ENCODE measurements at regions of chr7 and their contacts with region 1.

Region 1: DNA sequence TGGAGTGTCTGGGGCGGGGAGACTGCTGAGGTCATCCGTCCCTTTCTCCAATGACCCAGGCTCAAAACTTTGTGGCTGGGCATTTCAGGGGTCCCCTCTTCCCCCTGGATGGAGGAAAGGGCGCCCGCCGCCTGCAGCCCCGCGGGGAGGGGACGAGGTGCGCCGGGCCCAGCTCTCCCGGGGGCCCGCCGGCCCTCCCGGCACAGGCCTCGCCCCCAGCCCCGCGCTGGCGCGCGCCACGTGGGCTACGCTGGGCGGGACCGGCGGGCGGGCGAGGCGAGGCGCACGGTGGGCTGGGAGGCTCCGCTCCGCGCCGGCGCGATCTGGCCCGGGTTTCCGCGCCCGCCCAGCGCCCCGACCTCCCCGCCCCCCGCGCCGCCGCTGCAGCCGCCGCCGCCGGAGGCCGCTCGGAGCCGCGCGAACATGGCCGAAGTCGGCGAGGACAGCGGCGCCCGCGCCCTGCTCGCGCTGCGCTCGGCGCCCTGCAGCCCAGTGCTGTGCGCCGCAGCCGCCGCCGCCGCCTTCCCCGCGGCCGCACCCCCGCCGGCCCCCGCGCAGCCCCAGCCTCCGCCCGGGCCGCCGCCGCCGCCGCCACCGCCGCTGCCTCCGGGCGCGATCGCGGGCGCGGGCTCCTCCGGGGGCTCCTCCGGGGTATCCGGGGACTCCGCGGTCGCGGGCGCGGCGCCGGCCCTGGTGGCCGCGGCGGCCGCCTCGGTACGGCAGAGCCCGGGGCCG is at the start of gene FOXK1:
- DNase-seq: peak; percentile 75
- H3K4me3 Mint-ChIP-seq: peak within 1 kb of the TSS; percentile 81
- H3K27ac Mint-ChIP-seq: peak within 1 kb of the TSS; percentile 94
- H3K4me1 Mint-ChIP-seq: peaks cover 29% of the 10 kb centered on the region
- H3K27me3 Mint-ChIP-seq: no peaks in the 10 kb centered on the region
- total RNA-seq, gene FOXK1: 35.0 to 35.4 TPM

Region 2: GRCh38 chr7:4406288-4407058 is 275.6 kb before region 1 on chr7:
- CTCF ChIA-PET with region 1: no interaction called
- intact Hi-C with region 1: no loop called
- DNase-seq: no peak
- H3K4me3 Mint-ChIP-seq: no peak overlapping the region
- H3K27ac Mint-ChIP-seq: no peak overlapping the region
- H3K4me1 Mint-ChIP-seq: no peaks in the 10 kb centered on the region
- H3K27me3 Mint-ChIP-seq: peaks cover 15% of the 10 kb centered on the region

Region 3: GRCh38 chr7:4610768-4611467 is 71.1 kb before region 1 on chr7:
- CTCF ChIA-PET with region 1: no interaction called
- intact Hi-C with region 1: loop called (anchors 2 kb)
- DNase-seq: peak; percentile 71
- H3K4me3 Mint-ChIP-seq: no peak overlapping the region
- H3K27ac Mint-ChIP-seq: no peak overlapping the region
- H3K4me1 Mint-ChIP-seq: peaks cover 13% of the 10 kb centered on the region
- H3K27me3 Mint-ChIP-seq: no peaks in the 10 kb centered on the region

Region 4: DNA sequence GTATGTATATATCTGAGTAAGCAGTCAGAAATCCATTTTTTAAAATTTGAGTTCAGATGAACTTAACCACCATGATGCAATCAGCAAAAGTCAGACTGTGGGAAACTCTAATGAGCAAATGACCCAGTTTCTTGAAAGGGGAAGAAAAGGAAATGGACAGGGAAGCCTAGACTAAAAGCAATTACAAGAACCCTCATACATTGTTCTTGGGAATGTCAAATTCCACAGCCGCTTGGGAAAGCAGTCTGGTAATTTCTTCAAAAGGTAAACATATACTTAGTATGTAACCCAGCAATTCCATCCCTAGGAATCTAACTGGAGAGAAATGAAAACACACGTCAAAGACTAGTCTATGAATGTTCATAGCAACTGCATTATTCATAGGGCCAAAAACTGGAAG is 16.4 kb before region 1 on chr7:
- CTCF ChIA-PET with region 1: no interaction called
- intact Hi-C with region 1: no loop called
- DNase-seq: no peak
- H3K4me3 Mint-ChIP-seq: no peak overlapping the region
- H3K27ac Mint-ChIP-seq: no peak overlapping the region
- H3K4me1 Mint-ChIP-seq: no peaks in the 10 kb centered on the region
- H3K27me3 Mint-ChIP-seq: no peaks in the 10 kb centered on the region

Region 5: GRCh38 chr7:4700577-4701235 is 18.7 kb after region 1 on chr7:
- CTCF ChIA-PET with region 1: interaction called, 6 read pairs
- intact Hi-C with region 1: loop called (anchors 1 kb)
- DNase-seq: peak; percentile 68
- H3K4me3 Mint-ChIP-seq: no peak overlapping the region
- H3K27ac Mint-ChIP-seq: peak overlapping the region; percentile 75
- H3K4me1 Mint-ChIP-seq: peaks cover 54% of the 10 kb centered on the region
- H3K27me3 Mint-ChIP-seq: no peaks in the 10 kb centered on the region

Region 6: GRCh38 chr7:4725014-4725849 is 43.2 kb after region 1 on chr7:
- CTCF ChIA-PET with region 1: no interaction called
- intact Hi-C with region 1: loop called (anchors 1 kb)
- DNase-seq: peak; percentile 69
- H3K4me3 Mint-ChIP-seq: peak overlapping the region; percentile 78
- H3K27ac Mint-ChIP-seq: peak overlapping the region; percentile 71
- H3K4me1 Mint-ChIP-seq: peaks cover 56% of the 10 kb centered on the region
- H3K27me3 Mint-ChIP-seq: no peaks in the 10 kb centered on the region

Region 7: GRCh38 chr7:4744391-4745264 is 62.6 kb after region 1 on chr7:
- CTCF ChIA-PET with region 1: interaction called, 3 read pairs
- intact Hi-C with region 1: loop called (anchors 1 kb)
- DNase-seq: peak; percentile 77
- H3K4me3 Mint-ChIP-seq: peak overlapping the region; percentile 80
- H3K27ac Mint-ChIP-seq: peak overlapping the region; percentile 95
- H3K4me1 Mint-ChIP-seq: peaks cover 73% of the 10 kb centered on the region
- H3K27me3 Mint-ChIP-seq: no peaks in the 10 kb centered on the region

Region 8: GRCh38 chr7:4775250-4775847 is 93.3 kb after region 1 on chr7 and contains the start of gene AP5Z1:
- CTCF ChIA-PET with region 1: no interaction called
- intact Hi-C with region 1: loop called (anchors 1 kb)
- DNase-seq: peak; percentile 94
- H3K4me3 Mint-ChIP-seq: peak within 1 kb of the TSS; percentile 98
- H3K27ac Mint-ChIP-seq: peak within 1 kb of the TSS; percentile 93
- H3K4me1 Mint-ChIP-seq: peaks cover 40% of the 10 kb centered on the region
- H3K27me3 Mint-ChIP-seq: no peaks in the 10 kb centered on the region
- total RNA-seq, gene AP5Z1: 15.3 to 18.1 TPM

Region 9: GRCh38 chr7:5045558-5046396 is 363.7 kb after region 1 on chr7 and contains the start of gene RBAK:
- CTCF ChIA-PET with region 1: no interaction called
- intact Hi-C with region 1: loop called (anchors 5 kb)
- DNase-seq: peak; percentile 92
- H3K4me3 Mint-ChIP-seq: peak within 1 kb of the TSS; percentile 88
- H3K27ac Mint-ChIP-seq: peak within 1 kb of the TSS; percentile 81
- H3K4me1 Mint-ChIP-seq: peaks cover 38% of the 10 kb centered on the region
- H3K27me3 Mint-ChIP-seq: no peaks in the 10 kb centered on the region
- total RNA-seq, gene RBAK: 5.6 to 6.5 TPM